MCF 10A (cell line): ENCODE measurements at regions of chr16 and their contacts with region 1.

Region 1: DNA sequence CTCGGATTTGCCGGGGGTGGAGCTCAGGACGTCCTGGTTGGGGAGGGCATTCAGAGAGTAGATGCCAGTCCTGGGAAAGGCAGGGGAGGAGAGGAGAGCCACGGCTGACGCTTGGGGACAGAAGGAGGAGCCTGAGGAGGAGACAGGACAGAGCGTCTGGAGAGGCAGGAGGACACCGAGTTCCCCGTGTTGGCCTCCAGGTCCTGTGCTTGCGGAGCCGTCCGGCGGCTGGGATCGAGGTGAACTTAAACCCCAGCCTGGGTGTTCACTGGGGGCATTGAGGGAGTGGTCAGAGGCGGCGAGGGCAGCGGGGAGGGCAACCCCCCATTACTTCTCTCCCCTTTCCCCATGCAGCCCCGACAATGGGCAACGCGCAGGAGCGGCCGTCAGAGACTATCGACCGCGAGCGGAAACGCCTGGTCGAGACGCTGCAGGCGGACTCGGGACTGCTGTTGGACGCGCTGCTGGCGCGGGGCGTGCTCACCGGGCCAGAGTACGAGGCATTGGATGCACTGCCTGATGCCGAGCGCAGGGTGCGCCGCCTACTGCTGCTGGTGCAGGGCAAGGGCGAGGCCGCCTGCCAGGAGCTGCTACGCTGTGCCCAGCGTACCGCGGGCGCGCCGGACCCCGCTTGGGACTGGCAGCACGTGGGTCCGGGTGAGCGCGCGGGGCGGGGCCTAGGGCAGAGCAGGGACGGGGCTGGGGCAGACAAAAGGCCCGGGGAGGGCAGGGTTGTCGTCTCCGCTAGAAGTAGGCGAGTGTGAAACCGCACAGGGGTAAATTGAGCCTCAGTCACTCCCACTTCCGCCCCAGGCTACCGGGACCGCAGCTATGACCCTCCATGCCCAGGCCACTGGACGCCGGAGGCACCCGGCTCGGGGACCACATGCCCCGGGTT is 3.7 kb downstream of the NOL3 start:
- DNase-seq: peak; percentile 91
- H3K4me3 Mint-ChIP-seq: peak overlapping the region; percentile 81
- H3K27ac Mint-ChIP-seq: peak overlapping the region; percentile 79
- H3K4me1 Mint-ChIP-seq: peaks cover 61% of the 10 kb centered on the region
- H3K27me3 Mint-ChIP-seq: no peaks in the 10 kb centered on the region
- CTCF ChIP-seq: peak; percentile 8

Region 2: DNA sequence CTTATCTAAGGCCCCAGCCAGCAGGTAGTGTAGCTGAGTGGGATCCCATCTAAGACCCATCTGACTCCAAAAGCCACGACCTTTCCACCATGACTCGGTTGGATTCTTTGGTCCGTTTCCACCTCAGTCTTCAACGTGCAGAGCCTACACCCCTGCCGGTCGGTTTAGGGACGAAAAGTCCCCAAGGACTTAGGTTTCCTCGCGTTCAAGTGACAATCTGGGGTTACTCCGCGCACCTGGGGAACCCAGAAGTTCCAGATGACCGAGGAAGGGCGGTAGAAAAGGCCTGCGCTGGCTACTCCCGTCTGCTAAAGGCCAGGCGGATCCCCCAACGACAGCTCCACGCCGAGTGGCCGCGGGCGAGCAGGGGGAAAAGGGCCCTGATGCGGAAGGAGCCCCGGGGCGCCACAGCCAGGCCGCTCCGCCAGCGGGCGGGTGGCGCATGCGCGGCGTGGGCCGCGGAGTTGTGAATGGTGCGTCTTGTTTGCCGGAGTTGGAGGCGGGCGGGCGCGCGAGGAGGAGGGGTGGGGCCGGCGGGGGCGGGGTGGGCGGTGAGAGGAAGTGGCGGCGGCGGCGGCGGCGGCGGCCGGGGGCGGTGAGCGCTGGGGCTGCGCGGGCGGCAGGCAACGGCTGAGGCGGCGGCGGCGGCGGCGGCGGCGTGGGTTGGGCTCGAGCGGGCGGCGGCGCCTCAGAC is 145.4 kb before region 1 on chr16 and contains the start of gene CBFB:
- CTCF ChIA-PET with region 1: no interaction called
- POLR2A ChIA-PET with region 1: interaction called, 13 read pairs
- intact Hi-C with region 1: no loop called
- DNase-seq: peak; percentile 87
- H3K4me3 Mint-ChIP-seq: peak within 1 kb of the TSS; percentile 76
- H3K27ac Mint-ChIP-seq: peak within 1 kb of the TSS; percentile 35
- H3K4me1 Mint-ChIP-seq: no peaks in the 10 kb centered on the region
- H3K27me3 Mint-ChIP-seq: no peaks in the 10 kb centered on the region
- CTCF ChIP-seq: no peak
- total RNA-seq, gene CBFB: 87.1 and 105 TPM in 2 replicates

Region 3: GRCh38 chr16:67116388-67117311 is 57.4 kb before region 1 on chr16:
- CTCF ChIA-PET with region 1: no interaction called
- POLR2A ChIA-PET with region 1: no interaction called
- intact Hi-C with region 1: no loop called
- DNase-seq: no peak
- H3K4me3 Mint-ChIP-seq: no peak overlapping the region
- H3K27ac Mint-ChIP-seq: no peak overlapping the region
- H3K4me1 Mint-ChIP-seq: peaks cover 24% of the 10 kb centered on the region
- H3K27me3 Mint-ChIP-seq: no peaks in the 10 kb centered on the region
- CTCF ChIP-seq: no peak

Region 4: GRCh38 chr16:67159593-67160406 is 14.3 kb before region 1 on chr16 and contains the starts of genes FBXL8 and TRADD:
- CTCF ChIA-PET with region 1: interaction called, 9 read pairs
- POLR2A ChIA-PET with region 1: interaction called, 94 read pairs
- intact Hi-C with region 1: loop called (anchors 1 kb)
- DNase-seq: peak; percentile 70
- H3K4me3 Mint-ChIP-seq: peak within 1 kb of the TSS; percentile 84
- H3K27ac Mint-ChIP-seq: peak within 1 kb of the TSS; percentile 63
- H3K4me1 Mint-ChIP-seq: peaks cover 9% of the 10 kb centered on the region
- H3K27me3 Mint-ChIP-seq: no peaks in the 10 kb centered on the region
- CTCF ChIP-seq: peak; percentile 56
- total RNA-seq, gene FBXL8: 15.9 and 17.2 TPM in 2 replicates
- total RNA-seq, gene TRADD: 12.9 and 13.3 TPM in 2 replicates

Region 5: GRCh38 chr16:67198238-67198734 is 24.2 kb after region 1 on chr16:
- CTCF ChIA-PET with region 1: interaction called, 17 read pairs
- POLR2A ChIA-PET with region 1: interaction called, 18 read pairs
- intact Hi-C with region 1: no loop called
- DNase-seq: peak; percentile 84
- H3K4me3 Mint-ChIP-seq: peak overlapping the region; percentile 89
- H3K27ac Mint-ChIP-seq: peak overlapping the region; percentile 55
- H3K4me1 Mint-ChIP-seq: peaks cover 34% of the 10 kb centered on the region
- H3K27me3 Mint-ChIP-seq: no peaks in the 10 kb centered on the region
- CTCF ChIP-seq: peak; percentile 74

Region 6: DNA sequence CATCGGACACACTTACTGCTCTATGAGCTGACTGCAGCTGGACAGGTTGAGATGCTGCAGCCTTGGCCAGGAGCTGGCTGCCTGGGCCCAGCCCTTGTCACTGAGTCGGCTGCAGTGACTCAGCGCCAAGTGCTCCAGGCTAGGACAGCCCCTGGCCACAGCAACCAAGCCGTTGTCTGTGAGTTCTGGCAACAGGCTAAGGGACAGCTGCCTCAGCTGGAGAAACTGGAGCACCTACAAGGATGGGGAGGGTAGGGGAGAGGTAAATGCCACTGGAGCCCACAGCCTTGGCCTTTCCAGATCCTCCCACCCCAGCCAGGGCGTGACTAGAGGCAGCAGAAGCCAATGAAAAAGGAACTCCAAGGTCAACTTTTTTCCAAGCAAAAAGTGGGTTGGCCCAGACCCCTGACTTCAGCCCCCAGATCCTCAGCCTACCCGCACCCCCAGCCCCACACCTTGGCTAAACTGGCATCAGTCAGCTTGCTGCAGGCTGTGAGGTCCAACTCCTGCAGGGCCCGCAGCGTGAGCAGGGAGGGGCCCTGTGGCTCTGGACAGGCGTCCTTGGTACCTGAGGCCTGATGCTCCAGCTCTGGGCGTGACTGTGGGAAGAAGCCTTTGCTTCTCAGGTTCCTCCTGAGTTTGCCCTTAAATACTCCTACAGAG is 33.9 kb after region 1 on chr16:
- CTCF ChIA-PET with region 1: interaction called, 3 read pairs
- POLR2A ChIA-PET with region 1: interaction called, 20 read pairs
- intact Hi-C with region 1: no loop called
- DNase-seq: peak; percentile 81
- H3K4me3 Mint-ChIP-seq: peak overlapping the region; percentile 47
- H3K27ac Mint-ChIP-seq: peak overlapping the region; percentile 66
- H3K4me1 Mint-ChIP-seq: peaks cover 32% of the 10 kb centered on the region
- H3K27me3 Mint-ChIP-seq: no peaks in the 10 kb centered on the region
- CTCF ChIP-seq: no peak

Region 7: DNA sequence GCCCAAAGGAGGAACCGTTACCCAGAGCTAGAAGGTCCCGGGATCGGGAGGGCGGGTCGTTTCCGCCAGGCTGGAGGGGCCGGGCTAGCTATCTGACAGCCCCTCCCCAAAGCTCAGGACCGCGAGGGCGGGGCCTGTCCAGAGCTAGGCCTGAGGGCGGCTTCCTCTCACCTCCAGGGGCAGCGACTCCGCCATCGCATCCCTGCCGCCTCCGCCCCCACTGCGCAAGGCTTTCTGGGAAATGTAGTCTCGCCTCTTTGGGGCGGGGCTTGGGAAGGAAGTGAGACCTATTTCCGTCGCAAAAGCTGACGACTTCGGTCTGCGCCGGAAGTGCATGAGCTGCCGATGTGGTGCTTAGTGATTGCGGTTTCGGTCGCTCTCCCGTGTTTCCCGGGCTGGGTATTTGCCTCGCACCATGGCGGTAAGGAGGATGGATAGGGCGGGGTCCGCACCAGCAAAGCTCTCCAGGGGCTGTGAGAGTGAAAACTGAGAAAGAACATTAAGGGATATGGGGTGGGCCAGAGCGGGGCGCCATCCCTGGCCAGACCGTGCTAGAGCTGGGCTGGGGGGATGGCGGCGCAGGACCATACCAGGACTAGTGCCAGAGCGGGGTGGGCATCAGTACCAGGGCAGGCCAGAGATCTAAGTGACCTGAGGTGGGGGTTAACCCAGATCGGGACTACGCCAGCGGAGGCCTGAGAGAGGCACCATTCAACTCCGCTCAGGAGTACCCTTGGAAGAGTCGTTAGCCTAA is 52.9 kb after region 1 on chr16 and contains the start of gene TMEM208:
- CTCF ChIA-PET with region 1: interaction called, 4 read pairs
- POLR2A ChIA-PET with region 1: interaction called, 10 read pairs
- intact Hi-C with region 1: no loop called
- DNase-seq: peak; percentile 99
- H3K4me3 Mint-ChIP-seq: peak within 1 kb of the TSS; percentile 99
- H3K27ac Mint-ChIP-seq: peak within 1 kb of the TSS; percentile 99
- H3K4me1 Mint-ChIP-seq: peaks cover 21% of the 10 kb centered on the region
- H3K27me3 Mint-ChIP-seq: no peaks in the 10 kb centered on the region
- CTCF ChIP-seq: no peak
- total RNA-seq, gene TMEM208: 44.4 and 55.5 TPM in 2 replicates